AG04449 (cell line): ENCODE measurements at regions of chr11 and their contacts with region 1.

Region 1: DNA sequence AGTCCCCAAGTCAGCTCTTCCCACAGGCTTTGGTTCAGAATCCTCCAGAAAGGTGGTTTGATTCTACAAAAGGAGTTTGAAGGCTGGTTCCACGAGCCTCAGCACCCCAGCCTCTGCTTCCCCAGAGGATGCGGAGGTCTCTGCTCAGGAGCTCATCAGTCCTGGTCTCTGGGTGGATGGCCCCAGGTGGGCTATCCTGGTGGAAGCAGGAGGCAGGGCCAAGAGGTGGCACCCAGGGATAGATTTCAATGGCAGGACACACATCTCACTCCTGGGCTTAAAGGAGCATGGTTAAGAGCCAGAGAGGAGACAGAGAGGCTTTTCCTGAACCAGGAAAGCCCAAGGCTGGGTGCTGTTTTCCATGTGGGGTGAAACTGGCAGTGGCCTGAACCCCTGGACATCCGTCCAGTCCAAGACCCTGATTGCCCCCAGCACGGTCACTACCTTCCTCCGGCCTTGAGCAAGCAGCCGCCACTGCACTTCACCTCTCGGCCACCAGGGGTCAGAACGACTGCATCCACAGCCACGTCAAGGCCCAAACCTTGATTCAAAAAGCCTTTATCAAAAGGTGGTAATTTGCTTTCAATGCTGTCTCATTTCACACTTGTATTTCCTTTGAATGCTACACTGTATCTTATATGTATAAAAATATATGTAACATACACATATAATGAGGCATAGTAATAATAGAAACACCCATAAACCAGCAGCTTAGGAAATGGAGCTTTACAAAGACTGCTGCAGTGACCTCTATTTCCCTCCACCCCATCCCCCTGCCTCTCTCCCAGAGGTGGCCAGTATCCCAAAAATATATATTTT is 19.3 kb upstream of the FXYD2 start:
- DNase-seq: no peak
- H3K4me3 ChIP-seq: no peak overlapping the region
- CTCF ChIP-seq: peak; percentile 96

Region 2: GRCh38 chr11:117458275-117458674 is 385.6 kb before region 1 on chr11:
- CTCF ChIA-PET with region 1: no interaction called
- POLR2A ChIA-PET with region 1: no interaction called
- DNase-seq: no peak
- H3K4me3 ChIP-seq: no peak overlapping the region
- CTCF ChIP-seq: no peak

Region 3: GRCh38 chr11:117817368-117818040 is 26.4 kb before region 1 on chr11:
- CTCF ChIA-PET with region 1: interaction called, 36 read pairs
- POLR2A ChIA-PET with region 1: no interaction called
- DNase-seq: no peak
- H3K4me3 ChIP-seq: no peak overlapping the region
- CTCF ChIP-seq: peak; percentile 94

Region 4: GRCh38 chr11:117885777-117886176 is 41.9 kb after region 1 on chr11:
- CTCF ChIA-PET with region 1: interaction called, 11 read pairs
- POLR2A ChIA-PET with region 1: no interaction called
- DNase-seq: no peak
- H3K4me3 ChIP-seq: no peak overlapping the region
- CTCF ChIP-seq: no peak

Region 5: DNA sequence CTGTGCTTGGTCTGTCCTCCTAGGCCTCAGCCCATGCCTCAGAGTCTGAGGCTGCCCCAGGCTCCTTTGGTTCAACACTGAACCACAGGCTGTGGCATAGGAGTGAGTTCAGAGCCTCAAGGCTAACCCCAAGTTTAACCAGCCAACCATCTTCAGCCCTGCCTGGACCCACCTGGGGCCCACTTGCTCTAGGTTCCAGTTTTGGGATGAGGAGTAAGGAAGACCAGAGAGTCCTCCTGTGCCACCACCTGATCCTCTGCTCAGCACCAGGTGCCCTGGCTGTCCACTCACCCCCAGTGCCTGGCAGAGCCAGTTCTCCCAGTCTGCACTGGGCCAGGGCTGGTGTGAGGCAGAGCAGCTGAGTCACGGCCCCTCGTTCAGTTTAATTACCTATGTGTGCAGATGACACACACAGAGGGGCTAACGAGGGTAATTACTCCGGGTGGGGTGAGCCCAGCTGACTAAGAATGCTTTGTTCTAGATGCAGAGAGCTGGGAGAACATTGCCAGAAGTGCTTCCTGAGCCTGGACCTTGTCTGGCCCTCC is 97.4 kb after region 1 on chr11:
- CTCF ChIA-PET with region 1: interaction called, 341 read pairs
- POLR2A ChIA-PET with region 1: no interaction called
- DNase-seq: no peak
- H3K4me3 ChIP-seq: no peak overlapping the region
- CTCF ChIP-seq: no peak